Colonic mucosa (tissue), 4 donors: ENCODE measurements at regions of chr17 and their contacts with region 1.

Region 1: DNA sequence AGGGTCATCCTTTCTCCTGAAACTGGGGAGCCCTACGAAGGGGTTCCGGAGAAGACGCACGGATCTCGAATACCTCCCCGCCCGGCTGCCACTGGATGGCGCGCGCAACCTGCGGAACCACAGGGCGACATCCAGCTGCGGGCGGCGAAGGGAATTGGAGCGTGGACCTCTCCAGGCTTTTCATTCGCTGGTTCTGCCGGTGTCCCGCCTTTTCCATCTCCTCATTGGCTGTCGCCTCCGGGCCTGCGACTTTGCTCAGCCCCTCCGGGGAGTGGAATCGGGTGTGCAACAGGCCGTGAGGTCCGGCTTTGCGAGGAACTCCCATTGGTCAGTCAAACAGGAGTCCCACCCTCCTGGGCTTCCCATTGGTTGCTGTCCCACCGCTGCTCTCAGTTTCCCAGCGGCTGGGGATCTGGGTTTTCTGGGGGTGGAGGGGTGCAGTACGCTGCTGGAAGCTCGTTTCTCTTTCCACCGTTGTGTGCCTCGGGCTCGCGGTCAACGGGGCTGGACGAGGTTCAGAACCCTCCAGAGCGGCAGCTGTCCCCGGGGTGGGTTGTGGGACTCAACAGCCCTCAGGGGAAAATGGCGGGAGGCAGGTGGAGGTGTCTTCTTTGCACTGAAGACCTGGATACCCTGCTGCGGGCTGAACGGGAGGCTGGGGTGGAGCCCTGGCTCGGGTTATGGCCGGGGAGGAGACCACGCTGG is 14.5 kb downstream of the OR1D5 start:
- DNase-seq: peak; percentile 97
- H3K4me3 ChIP-seq: peak overlapping the region; percentile 48
- H3K27ac ChIP-seq: peak overlapping the region; percentile 4
- H3K4me1 ChIP-seq: no peaks in the 10 kb centered on the region
- H3K27me3 ChIP-seq: no peaks in the 10 kb centered on the region
- CTCF ChIP-seq: peak; percentile 71

Region 2: GRCh38 chr17:3335884-3336283 is 287.0 kb after region 1 on chr17:
- intact Hi-C with region 1: loop called (anchors 10 kb)
- DNase-seq: no peak
- H3K4me3 ChIP-seq: no peak overlapping the region
- H3K27ac ChIP-seq: no peak overlapping the region
- H3K4me1 ChIP-seq: no peaks in the 10 kb centered on the region
- H3K27me3 ChIP-seq: no peaks in the 10 kb centered on the region
- CTCF ChIP-seq: no peak